Naive thymus-derived CD4-positive, alpha-beta T cell (primary cell): ENCODE measurements at regions of chr10 and their contacts with region 1.

Region 1: DNA sequence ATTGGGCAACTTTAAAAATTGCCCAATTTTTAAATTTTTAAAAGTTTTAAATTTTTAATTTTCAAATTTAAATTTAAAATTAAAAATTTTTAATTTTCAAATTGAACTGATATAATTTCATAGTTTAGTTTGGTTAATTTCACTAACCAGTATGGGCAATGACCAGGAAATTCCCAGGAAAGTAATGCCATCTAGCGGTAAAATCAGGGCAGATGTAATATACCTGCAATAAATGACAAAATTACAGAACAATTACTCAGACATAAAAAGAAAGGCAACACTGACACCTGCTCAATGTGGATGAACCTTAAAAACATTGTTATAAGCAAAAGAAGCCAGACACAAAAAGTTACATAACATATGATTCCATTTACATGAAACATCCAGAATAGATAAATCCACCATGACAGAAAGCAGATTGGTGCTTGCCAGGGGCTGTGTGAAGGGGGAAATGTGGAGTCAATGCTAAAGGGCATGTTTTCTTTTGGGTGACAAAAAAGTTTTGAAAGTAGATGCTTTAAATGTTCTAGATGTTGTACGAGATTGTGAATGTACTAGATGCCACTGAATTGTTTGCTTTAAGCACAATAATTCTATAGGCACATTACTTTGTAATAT is 28.6 kb upstream of the SLC16A12 start:
- DNase-seq: peak in 7 of 9 donors; percentile 13 to 58 (median 48)
- ATAC-seq: peak; percentile 65
- H3K4me3 ChIP-seq: no peak overlapping the region
- H3K4me3 Mint-ChIP-seq: no peak overlapping the region
- H3K27ac ChIP-seq: no peak overlapping the region
- H3K27ac Mint-ChIP-seq: no peak overlapping the region
- H3K4me1 ChIP-seq: no peaks in the 10 kb centered on the region
- H3K4me1 Mint-ChIP-seq: no peaks in the 10 kb centered on the region
- H3K27me3 ChIP-seq: no peaks in the 10 kb centered on the region
- H3K27me3 Mint-ChIP-seq: peaks cover 4 to 44% (median 14%) of the 10 kb centered on the region in 5 donors

Region 2: DNA sequence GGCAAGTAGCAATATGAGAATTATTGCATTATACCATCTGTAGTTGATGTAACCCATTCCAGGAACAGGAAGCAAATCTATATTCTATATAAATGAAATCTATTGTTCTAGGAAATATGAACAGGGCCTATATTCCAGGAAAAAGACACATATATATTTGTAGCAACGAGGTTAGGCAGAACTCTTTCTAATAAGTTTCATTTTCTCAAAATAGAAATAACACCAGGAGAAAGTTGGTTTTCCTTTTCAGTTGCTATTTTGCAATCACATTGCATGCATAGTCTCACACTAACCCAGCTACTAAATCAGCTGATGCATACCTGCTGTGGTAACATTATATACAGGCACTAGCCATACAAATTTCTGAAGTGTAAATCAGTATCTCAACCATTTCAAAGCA is 268.4 kb before region 1 on chr10:
- CTCF ChIA-PET with region 1: no interaction called
- POLR2A ChIA-PET with region 1: no interaction called
- intact Hi-C with region 1: loop called (anchors 1 to 10 kb)
- DNase-seq: no peak
- ATAC-seq: no peak
- H3K4me3 ChIP-seq: no peak overlapping the region
- H3K4me3 Mint-ChIP-seq: peak overlapping the region in 1 of 10 donors; percentile 2
- H3K27ac ChIP-seq: no peak overlapping the region
- H3K27ac Mint-ChIP-seq: peak overlapping the region in 1 of 9 donors; percentile 67
- H3K4me1 ChIP-seq: peaks cover 0 to 8% of the 10 kb centered on the region in 2 donors
- H3K4me1 Mint-ChIP-seq: peaks cover 11 to 40% (median 23%) of the 10 kb centered on the region in 7 donors
- H3K27me3 ChIP-seq: no peaks in the 10 kb centered on the region
- H3K27me3 Mint-ChIP-seq: peaks cover 0 to 25% (median 0%) of the 10 kb centered on the region in 5 donors

Region 3: DNA sequence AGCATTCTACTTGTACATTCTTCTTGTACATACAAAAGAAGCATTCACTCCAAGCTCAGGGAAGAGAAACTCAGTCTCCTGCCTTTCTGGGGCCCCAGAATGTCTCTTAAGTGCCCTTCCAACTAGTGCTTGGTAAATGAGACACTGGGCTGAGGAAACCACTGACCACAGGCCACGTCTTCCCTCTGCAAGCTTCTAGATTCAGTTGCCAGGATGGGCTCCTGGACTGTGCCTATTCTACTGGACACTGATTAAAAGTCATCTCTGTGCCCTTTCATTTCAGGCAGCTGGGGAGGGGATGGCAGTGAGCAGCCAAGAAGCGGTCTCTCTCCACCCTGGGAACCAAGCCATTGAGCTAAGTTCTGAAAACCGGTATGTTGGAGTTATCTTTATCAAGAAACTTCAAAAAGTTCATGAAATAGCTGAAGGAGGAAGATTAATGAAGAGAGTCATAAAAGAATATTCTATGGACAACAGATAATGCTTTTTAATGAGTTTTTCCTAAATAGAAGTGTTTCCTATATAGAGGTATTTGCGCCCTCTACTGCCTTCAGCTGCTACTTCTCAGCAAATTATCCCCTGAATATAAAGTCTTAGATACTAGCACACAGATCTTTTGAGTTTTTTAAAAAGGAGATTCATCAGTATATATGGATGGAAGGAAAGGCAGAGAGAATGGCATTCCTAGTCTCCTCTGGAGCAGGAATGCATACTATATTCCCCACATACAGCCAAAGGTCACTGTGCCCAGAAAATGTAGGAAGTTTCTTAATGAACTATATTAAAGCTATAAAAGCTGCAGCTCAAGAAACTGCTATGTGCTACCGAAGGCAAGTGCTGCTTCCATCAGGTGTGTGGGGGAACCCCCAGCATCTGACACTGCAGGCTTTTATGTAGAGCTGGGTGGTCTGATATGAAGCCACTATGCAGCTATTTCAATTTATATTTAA is 194.5 kb before region 1 on chr10:
- CTCF ChIA-PET with region 1: interaction called, 5 read pairs
- POLR2A ChIA-PET with region 1: no interaction called
- intact Hi-C with region 1: loop called in 1 of 2 experiments (anchors 5 kb)
- DNase-seq: peak in 6 of 9 donors; percentile 12 to 40 (median 24)
- ATAC-seq: peak; percentile 62
- H3K4me3 ChIP-seq: no peak overlapping the region
- H3K4me3 Mint-ChIP-seq: no peak overlapping the region
- H3K27ac ChIP-seq: no peak overlapping the region
- H3K27ac Mint-ChIP-seq: no peak overlapping the region
- H3K4me1 ChIP-seq: peaks cover 0 to 7% of the 10 kb centered on the region in 2 donors
- H3K4me1 Mint-ChIP-seq: peaks cover 0 to 18% (median 14%) of the 10 kb centered on the region in 7 donors
- H3K27me3 ChIP-seq: no peaks in the 10 kb centered on the region
- H3K27me3 Mint-ChIP-seq: peaks cover 0 to 37% (median 0%) of the 10 kb centered on the region in 5 donors

Region 4: GRCh38 chr10:89426230-89426868 is 137.6 kb before region 1 on chr10:
- CTCF ChIA-PET with region 1: interaction called, 5 read pairs
- POLR2A ChIA-PET with region 1: no interaction called
- intact Hi-C with region 1: loop called (anchors 1 kb)
- DNase-seq: peak in 4 of 9 donors; percentile 23 to 38 (median 28)
- ATAC-seq: peak; percentile 81
- H3K4me3 ChIP-seq: no peak overlapping the region
- H3K4me3 Mint-ChIP-seq: no peak overlapping the region
- H3K27ac ChIP-seq: no peak overlapping the region
- H3K27ac Mint-ChIP-seq: no peak overlapping the region
- H3K4me1 ChIP-seq: no peaks in the 10 kb centered on the region
- H3K4me1 Mint-ChIP-seq: peaks cover under 1 to 8% (median 3%) of the 10 kb centered on the region in 7 donors
- H3K27me3 ChIP-seq: no peaks in the 10 kb centered on the region
- H3K27me3 Mint-ChIP-seq: peaks cover 0 to 16% (median 4%) of the 10 kb centered on the region in 5 donors